ENCODE measurements at regions of chr2 and their contacts with region 1.

Region 1: GRCh38 chr2:26846328-26847306 is 1.3 kb upstream of the DPYSL5 start:
- DNase-seq: peak; percentile 75 to 86 (median 84)
- H3K4me3 ChIP-seq: peak overlapping the region in 2 of 7 experiments; percentile 31 to 44
- H3K27ac ChIP-seq: no peak overlapping the region
- H3K4me1 ChIP-seq: peaks cover 0 to 35% (median 27%) of the 10 kb centered on the region in 4 experiments
- H3K27me3 ChIP-seq: peaks cover 14 to 78% (median 32%) of the 10 kb centered on the region in 5 experiments

Region 2: GRCh38 chr2:26917135-26917836 is 70.7 kb after region 1 on chr2:
- CTCF ChIA-PET with region 1: interaction called, 53 read pairs
- POLR2A ChIA-PET with region 1: no interaction called
- DNase-seq: no peak
- H3K4me3 ChIP-seq: no peak overlapping the region
- H3K27ac ChIP-seq: no peak overlapping the region
- H3K4me1 ChIP-seq: peaks cover 0 to 8% (median 2%) of the 10 kb centered on the region in 4 experiments
- H3K27me3 ChIP-seq: peaks cover 0 to 4% (median 0%) of the 10 kb centered on the region in 5 experiments

Region 3: GRCh38 chr2:26922405-26923188 is 76.0 kb after region 1 on chr2:
- CTCF ChIA-PET with region 1: interaction called, 53 read pairs
- POLR2A ChIA-PET with region 1: no interaction called
- DNase-seq: peak; percentile 61 to 78 (median 75)
- H3K4me3 ChIP-seq: no peak overlapping the region
- H3K27ac ChIP-seq: no peak overlapping the region
- H3K4me1 ChIP-seq: peaks cover 0 to 6% (median 3%) of the 10 kb centered on the region in 4 experiments
- H3K27me3 ChIP-seq: peaks cover 0 to 2% (median 0%) of the 10 kb centered on the region in 5 experiments

Region 4: GRCh38 chr2:26933431-26934334 is 87.1 kb after region 1 on chr2:
- CTCF ChIA-PET with region 1: interaction called, 89 read pairs
- POLR2A ChIA-PET with region 1: no interaction called
- DNase-seq: no peak
- H3K4me3 ChIP-seq: no peak overlapping the region
- H3K27ac ChIP-seq: no peak overlapping the region
- H3K4me1 ChIP-seq: no peaks in the 10 kb centered on the region
- H3K27me3 ChIP-seq: no peaks in the 10 kb centered on the region

Region 5: GRCh38 chr2:26942543-26943295 is 96.1 kb after region 1 on chr2:
- CTCF ChIA-PET with region 1: interaction called, 89 read pairs
- POLR2A ChIA-PET with region 1: interaction called, 3 read pairs
- DNase-seq: peak; percentile 54 to 79 (median 71)
- H3K4me3 ChIP-seq: no peak overlapping the region
- H3K27ac ChIP-seq: no peak overlapping the region
- H3K4me1 ChIP-seq: peaks cover 0 to 3% (median 0%) of the 10 kb centered on the region in 4 experiments
- H3K27me3 ChIP-seq: peaks cover 0 to 8% (median 3%) of the 10 kb centered on the region in 5 experiments

Region 6: DNA sequence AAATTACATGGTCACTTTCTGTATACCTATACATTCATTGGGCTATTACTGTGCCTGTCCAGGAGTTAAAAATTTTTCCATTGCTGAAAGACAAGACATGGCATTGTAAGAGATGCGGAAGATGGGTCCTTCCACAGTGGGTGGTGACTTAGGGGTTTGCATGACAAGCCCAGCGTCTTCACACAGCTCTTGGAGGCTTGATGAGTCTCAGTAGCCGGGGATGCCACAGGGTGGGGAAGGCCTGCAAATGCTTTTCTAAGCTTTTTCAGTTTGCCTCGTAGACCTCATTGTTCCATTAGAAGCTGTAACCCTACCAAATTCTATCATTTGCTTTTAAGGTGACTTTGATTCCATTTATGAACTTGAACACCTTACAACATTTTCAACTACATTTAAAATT is 105.8 kb after region 1 on chr2:
- CTCF ChIA-PET with region 1: interaction called, 14 read pairs
- POLR2A ChIA-PET with region 1: no interaction called
- DNase-seq: no peak
- H3K4me3 ChIP-seq: no peak overlapping the region
- H3K27ac ChIP-seq: no peak overlapping the region
- H3K4me1 ChIP-seq: no peaks in the 10 kb centered on the region
- H3K27me3 ChIP-seq: peaks cover 0 to 4% (median 0%) of the 10 kb centered on the region in 5 experiments